ENCODE measurements at regions of chr3 and their contacts with region 1.

Region 1: DNA sequence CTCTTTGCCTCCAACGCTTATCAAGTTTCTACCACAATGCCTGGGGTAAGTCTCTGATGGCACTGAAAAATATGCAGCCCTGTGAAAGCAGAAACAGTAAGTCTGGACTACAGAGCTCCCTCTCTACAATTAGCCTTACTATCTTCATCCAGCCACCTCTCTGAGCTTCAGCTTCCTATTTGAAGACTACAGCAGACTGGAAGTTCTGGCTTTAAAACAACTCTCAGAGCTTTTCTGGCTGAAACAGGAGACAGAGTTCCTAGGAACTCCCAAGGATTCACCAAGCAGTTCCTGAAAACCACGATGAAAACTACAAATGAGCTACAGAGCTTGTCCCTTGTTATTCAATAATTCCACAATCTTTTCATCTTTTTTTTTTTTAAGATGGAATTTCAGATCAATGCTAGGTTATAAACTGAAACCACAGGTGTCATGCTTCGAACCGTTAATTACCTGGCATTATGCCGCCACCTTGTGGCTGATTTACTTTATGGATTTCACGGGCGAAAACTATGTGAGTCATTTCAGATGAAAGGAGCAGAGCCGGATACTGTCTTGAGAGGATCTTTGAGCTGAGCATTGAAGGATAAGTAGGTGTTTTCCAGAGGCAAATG is 3.9 kb downstream of the CRYGS start:
- DNase-seq: peak; percentile 75

Region 2: DNA sequence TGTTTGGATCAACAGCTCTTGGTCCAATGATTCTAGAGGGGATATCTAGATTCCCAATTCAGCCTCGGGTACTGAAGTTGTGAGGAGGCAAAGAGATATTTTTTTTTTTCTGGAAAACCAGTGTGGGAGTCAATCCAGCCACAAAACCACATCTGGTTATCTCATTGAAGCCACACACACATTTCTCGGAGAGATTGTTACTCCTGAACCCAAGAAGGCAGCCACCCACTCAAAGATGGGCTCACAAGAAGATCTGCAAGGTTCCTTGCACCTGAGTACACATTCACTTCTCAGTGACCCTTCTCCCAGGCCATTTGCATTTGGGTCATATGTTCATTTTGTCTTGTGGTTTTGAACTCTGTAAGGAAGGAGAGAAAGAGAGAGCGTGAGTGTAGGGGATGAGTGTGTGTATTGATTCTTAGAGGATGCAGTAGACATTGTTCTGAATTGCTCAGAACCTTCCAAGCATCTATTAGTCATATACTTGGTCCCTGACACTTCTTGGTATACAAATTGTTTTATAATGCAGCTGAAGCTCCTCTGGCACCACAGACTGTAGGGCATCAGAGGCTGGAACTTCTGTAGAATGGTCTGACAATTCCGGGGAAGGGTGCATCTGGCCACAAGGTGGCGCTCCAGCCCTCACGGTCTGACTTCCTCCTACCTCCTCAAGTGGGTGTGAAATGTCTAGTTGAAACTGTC is 563.2 kb before region 1 on chr3:
- in situ Hi-C with region 1: loop called (anchors 25 kb)
- DNase-seq: peak; percentile 88

Region 3: GRCh38 chr3:186209810-186210752 is 330.2 kb before region 1 on chr3:
- in situ Hi-C with region 1: no loop called
- DNase-seq: peak; percentile 91

Region 4: DNA sequence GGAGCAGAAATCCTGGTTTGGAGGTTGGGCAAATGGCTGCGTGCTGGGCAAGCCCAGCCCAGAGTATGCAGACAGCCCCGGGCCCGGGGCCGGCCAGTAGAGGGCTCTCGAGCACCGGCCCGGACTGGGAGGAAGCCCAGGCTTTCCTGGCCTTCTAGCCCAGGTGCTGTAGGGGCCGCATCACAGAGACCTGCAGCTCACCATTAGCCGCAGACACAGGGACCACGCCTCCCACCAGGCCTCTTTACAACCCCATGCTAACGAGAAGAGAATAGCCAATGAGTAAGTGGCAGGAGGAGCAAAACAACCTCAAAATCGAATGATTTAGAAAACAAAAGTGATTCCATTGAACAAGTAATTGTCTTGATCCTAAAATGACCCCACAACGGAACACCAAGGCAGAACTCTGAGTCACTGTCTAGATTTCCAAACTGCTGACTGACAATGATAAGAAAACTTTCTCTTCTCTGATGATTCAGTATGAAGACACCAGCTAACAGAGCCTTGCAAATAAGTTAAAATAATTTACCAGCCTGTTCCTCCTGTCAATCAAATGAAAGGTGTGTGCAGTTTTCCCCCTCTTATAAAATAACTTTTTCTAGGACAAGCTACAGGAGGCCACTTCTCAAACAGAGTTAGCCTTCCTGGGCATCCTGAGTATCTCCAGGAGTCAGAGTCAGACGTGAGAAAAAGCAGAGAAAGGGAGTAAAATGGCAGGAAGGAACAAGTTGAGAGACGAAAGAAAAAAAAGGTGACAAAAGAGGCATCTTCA is 280.5 kb before region 1 on chr3:
- in situ Hi-C with region 1: loop called (anchors 25 kb)
- DNase-seq: peak; percentile 69

Region 5: DNA sequence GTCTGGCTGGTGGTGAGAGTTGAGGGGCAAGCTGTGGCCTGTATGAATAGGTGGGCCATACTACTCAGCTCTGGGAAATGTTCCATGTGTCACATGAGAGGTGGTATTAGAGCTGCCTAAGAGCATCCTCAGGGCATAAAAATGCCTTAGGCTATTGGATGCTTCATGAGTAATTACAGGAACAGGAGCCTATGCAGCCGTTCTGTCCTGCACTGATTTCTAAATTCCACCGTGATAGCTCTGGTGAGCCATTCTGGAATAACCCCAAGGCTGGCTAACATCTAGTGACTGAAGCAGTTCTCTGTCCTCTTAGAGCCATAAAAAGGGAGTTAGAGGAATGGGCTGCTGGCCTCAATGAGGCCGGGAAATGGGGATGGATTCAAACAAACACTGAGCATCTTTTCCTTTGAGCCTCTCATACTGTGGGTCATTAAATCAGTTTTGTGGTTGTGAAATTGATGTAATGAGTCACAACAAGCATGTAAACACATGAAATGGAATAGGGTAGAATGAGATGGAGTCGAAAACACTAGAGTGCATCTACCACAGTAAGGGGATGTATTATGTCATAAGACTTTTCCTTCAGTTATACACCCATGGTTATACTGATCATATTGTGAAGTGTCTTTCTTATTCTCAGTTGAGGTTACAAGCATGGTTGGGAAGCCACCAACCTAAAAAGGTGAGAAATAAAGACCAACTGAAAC is 219.3 kb before region 1 on chr3:
- in situ Hi-C with region 1: no loop called
- DNase-seq: no peak